Activated B cell treated with CpG ODN at 0.5 μM for 24 hours (primary cell): ENCODE measurements at regions of chr3 and their contacts with region 1.

Region 1: GRCh38 chr3:52225452-52226228 is at the start of gene TLR9:
- DNase-seq: peak; percentile 77
- ATAC-seq: peak; percentile 87
- H3K4me3 Mint-ChIP-seq: peak within 1 kb of the TSS; percentile 90
- H3K27ac Mint-ChIP-seq: peak within 1 kb of the TSS; percentile 97
- H3K4me1 Mint-ChIP-seq: peaks cover 77% of the 10 kb centered on the region
- H3K27me3 Mint-ChIP-seq: no peaks in the 10 kb centered on the region
- CTCF ChIP-seq: no peak
- total RNA-seq, gene TLR9: 10.4 and 11.4 TPM in 2 replicates

Region 2: DNA sequence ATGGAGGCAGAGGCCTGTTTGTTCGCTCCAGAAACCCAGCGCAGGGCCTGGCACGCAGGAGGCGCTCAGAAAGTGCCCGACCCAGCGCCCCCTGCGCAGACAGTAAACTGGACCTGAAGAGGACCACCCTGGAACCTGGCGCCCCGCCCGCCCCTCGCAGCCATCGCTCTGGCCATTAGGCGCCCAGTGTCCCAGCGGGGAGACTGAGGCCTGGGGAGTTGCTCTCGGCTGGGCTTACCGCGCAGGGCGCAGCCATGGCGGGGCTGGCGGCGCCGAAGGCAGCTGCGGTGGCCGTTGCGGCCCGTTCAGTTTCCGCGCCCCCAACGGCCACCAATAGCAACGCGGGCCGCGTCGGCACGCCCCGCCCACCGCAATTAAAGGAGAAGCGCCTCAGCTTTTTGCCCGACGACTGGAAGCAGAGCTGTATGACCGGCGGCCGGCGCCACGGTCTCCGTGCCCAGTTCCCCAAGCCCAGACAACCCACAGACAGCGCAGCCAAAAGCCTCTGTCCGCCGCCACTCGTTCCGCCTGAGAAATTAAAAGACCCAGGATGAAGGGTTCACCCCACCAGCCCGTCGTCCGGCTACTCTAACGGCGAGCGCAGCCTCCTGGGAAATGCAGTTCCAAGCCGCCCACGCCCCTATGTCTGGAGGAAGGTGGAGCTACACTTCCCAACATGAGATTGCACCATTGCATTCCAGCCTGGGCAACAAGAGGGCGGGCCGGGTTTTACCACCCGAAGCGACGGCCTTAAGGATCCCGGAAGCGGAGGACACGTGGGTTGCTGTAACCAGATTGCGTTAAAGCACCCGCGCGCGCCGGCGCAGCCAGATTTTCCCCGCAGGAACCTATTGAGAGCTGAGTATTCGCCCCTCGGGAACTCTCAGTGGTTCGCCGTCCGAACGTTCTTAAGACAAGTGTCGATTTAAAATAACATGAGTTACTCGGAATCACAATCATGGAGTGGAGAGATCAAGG is 71.2 kb before region 1 on chr3 and contains the start of gene POC1A:
- CTCF ChIA-PET with region 1: no interaction called
- POLR2A ChIA-PET with region 1: interaction called, 12 read pairs
- intact Hi-C with region 1: loop called (anchors 1 kb)
- DNase-seq: peak; percentile 84
- ATAC-seq: peak; percentile 87
- H3K4me3 Mint-ChIP-seq: peak within 1 kb of the TSS; percentile 96
- H3K27ac Mint-ChIP-seq: peak within 1 kb of the TSS; percentile 97
- H3K4me1 Mint-ChIP-seq: peaks cover 13% of the 10 kb centered on the region
- H3K27me3 Mint-ChIP-seq: no peaks in the 10 kb centered on the region
- CTCF ChIP-seq: no peak
- total RNA-seq, gene POC1A: 2.3 and 2.4 TPM in 2 replicates

Region 3: DNA sequence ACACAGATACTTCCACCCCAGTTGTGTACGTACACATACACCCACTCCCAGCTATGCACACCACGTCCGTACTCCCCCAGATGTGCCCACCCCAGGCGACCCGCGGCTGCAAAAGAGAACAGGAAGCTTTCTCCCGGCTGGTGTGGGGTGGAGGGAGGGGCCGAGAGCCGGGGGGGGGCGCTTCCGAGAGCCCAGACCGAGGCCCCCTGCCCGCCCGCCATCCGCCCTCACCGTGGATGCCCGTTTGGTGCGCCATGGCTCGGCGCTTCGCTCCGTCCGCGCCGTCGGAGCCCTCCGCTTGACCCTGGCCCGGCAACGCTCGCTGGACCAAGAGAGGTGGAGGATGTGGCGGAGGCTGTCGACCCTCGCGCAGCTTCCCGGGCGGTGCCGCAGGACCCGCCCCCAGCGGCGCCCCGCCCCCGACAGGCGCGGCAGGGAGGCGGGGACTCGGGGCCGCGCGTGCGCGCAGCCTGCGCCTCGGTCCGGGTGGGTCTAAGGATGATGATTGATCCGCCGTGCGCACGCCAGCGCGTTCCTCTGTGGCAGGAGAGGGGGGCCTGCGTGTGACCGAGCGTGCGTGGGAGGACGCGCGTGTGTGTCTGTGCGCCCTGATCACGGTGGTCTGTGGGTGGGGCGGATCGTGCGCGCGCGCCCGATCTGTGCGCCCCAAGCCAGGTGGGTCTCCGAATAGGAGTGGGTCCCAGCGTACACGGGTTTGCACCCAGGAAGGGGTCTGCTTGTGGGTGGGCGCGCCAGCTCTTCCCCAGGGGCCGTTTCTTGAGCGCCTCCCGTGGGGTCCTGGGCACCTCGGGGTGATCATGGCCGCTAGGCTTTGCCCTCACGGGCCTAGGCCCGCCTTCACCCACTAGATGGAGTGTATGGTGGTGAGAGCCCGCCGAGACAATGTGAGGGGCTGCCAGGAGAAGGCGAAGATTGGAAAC is 13.4 kb after region 1 on chr3 and contains the start of gene TWF2:
- CTCF ChIA-PET with region 1: interaction called, 9 read pairs
- POLR2A ChIA-PET with region 1: interaction called, 147 read pairs
- intact Hi-C with region 1: loop called (anchors 1 kb)
- DNase-seq: peak; percentile 94
- ATAC-seq: peak; percentile 86
- H3K4me3 Mint-ChIP-seq: peak within 1 kb of the TSS; percentile 96
- H3K27ac Mint-ChIP-seq: peak within 1 kb of the TSS; percentile 93
- H3K4me1 Mint-ChIP-seq: peaks cover 72% of the 10 kb centered on the region
- H3K27me3 Mint-ChIP-seq: no peaks in the 10 kb centered on the region
- CTCF ChIP-seq: no peak
- total RNA-seq, gene TWF2: 74.1 and 76.7 TPM in 2 replicates

Region 4: DNA sequence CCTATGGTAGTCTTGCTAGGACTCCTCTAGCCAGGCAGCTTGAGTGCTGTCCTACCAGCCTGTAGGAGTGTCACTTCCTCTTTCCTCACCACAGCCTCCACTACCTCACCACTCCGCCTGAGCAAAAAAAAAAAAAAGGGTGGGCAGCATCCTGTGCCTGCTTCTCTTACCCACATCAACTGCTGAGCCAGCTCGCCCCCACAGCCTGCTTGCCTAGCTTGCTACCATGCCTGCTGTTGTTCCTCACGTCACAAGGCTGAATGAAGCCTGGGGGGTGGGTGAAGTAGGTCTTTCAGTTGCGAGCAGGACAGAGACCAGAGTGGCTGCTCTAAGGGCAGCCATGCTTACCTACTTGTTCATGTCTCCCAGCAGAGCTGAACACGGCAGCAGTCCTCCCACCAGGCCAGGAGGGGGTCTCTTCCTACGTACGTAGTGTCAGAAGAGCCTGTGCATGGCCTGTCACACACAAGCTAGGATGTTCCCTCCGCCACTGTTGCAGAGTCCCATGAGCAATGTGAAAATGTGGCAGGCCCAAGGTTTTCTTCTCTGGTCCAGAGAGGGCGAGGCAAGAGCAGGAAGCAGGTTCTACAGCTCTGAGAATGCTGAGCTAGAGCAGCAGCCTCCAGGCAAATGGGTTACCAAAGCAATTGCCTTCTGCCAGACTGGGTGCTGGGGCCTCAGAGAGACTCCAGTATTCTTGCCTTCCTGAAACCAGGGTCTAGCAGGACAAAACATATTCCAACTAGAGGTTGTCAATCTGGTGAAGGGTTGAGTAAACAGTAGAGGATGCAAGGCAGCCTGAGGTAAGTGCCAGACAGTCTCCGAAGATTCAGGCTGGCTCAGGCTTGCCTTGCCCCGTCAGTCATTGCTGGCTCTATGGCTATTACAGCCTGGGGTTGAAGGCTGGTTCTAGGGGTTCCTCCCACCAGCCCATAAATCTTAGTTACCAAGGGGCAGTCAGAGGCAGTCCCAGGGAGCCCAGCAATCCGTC is 28.0 kb after region 1 on chr3:
- CTCF ChIA-PET with region 1: interaction called, 32 read pairs
- POLR2A ChIA-PET with region 1: interaction called, 32 read pairs
- intact Hi-C with region 1: loop called (anchors 1 kb)
- DNase-seq: peak; percentile 58
- ATAC-seq: peak; percentile 96
- H3K4me3 Mint-ChIP-seq: peak overlapping the region; percentile 76
- H3K27ac Mint-ChIP-seq: peak overlapping the region; percentile 97
- H3K4me1 Mint-ChIP-seq: peaks cover 42% of the 10 kb centered on the region
- H3K27me3 Mint-ChIP-seq: no peaks in the 10 kb centered on the region
- CTCF ChIP-seq: no peak

Region 5: DNA sequence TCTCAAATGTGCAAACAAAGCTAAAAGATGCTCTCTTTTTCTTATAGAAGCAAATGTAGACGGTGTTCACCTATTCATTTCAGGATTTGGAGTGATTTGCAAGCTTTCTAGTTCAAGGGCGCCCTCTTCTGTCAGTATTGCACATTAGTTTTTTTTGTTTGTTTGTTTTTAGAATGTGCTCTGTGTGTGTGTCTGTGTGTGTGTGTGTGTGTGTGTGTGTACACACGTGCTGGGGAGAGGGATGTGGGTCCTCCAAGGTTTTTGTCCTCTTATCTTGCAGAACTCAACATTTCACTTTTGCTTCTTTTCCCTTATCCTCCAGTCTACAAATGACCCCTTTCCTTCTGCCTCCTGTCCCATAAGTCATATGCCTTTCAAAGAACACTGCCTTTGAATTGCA is 114.0 kb after region 1 on chr3:
- CTCF ChIA-PET with region 1: interaction called, 58 read pairs
- POLR2A ChIA-PET with region 1: interaction called, 8 read pairs
- intact Hi-C with region 1: loop called (anchors 1 kb)
- DNase-seq: no peak
- ATAC-seq: peak; percentile 40
- H3K4me3 Mint-ChIP-seq: no peak overlapping the region
- H3K27ac Mint-ChIP-seq: no peak overlapping the region
- H3K4me1 Mint-ChIP-seq: no peaks in the 10 kb centered on the region
- H3K27me3 Mint-ChIP-seq: no peaks in the 10 kb centered on the region
- CTCF ChIP-seq: peak; percentile 48